Heart left ventricle (tissue), 16 donors: ENCODE measurements at regions of chr14 and their contacts with region 1.

Region 1: GRCh38 chr14:23057757-23058653 is 685 bp upstream of the CDH24 start:
- DNase-seq: peak; percentile 84 to 91 (median 88)
- ATAC-seq: peak; percentile 73 to 77 (median 74)
- H3K4me3 ChIP-seq: peak overlapping the region; percentile 46 to 84 (median 68)
- H3K27ac ChIP-seq: peak overlapping the region in 10 of 12 donors; percentile 39 to 77 (median 58)
- H3K4me1 ChIP-seq: peaks cover 0 to 39% (median 25%) of the 10 kb centered on the region in 12 donors
- H3K27me3 ChIP-seq: no peaks in the 10 kb centered on the region
- CTCF ChIP-seq: peak; percentile 92 to 96 (median 94)
- POLR2A ChIP-seq: no peak

Region 2: GRCh38 chr14:22986508-22987054 is 71.4 kb before region 1 on chr14:
- intact Hi-C with region 1: loop called (anchors 1 to 2 kb)
- DNase-seq: peak; percentile 82 to 88 (median 87)
- ATAC-seq: peak; percentile 35 to 52 (median 40)
- H3K4me3 ChIP-seq: no peak overlapping the region
- H3K27ac ChIP-seq: no peak overlapping the region
- H3K4me1 ChIP-seq: peaks cover 0 to 19% (median 8%) of the 10 kb centered on the region in 12 donors
- H3K27me3 ChIP-seq: peaks cover 0 to 8% (median 0%) of the 10 kb centered on the region in 9 donors
- CTCF ChIP-seq: peak; percentile 85 to 95 (median 92)
- POLR2A ChIP-seq: no peak

Region 3: GRCh38 chr14:22994762-22995275 is 63.2 kb before region 1 on chr14:
- intact Hi-C with region 1: loop called in 2 of 10 experiments (anchors 2 kb)
- DNase-seq: peak in 2 of 5 donors; percentile 24 to 27
- ATAC-seq: peak; percentile 25 to 72 (median 65)
- H3K4me3 ChIP-seq: no peak overlapping the region
- H3K27ac ChIP-seq: no peak overlapping the region
- H3K4me1 ChIP-seq: peaks cover 0 to 25% (median 3%) of the 10 kb centered on the region in 12 donors
- H3K27me3 ChIP-seq: no peaks in the 10 kb centered on the region
- CTCF ChIP-seq: peak; percentile 40 to 67 (median 56)
- POLR2A ChIP-seq: no peak

Region 4: GRCh38 chr14:23020143-23021128 is 37.6 kb before region 1 on chr14:
- intact Hi-C with region 1: no loop called
- DNase-seq: no peak
- ATAC-seq: no peak
- H3K4me3 ChIP-seq: no peak overlapping the region
- H3K27ac ChIP-seq: no peak overlapping the region
- H3K4me1 ChIP-seq: peaks cover 0 to 9% (median 0%) of the 10 kb centered on the region in 12 donors
- H3K27me3 ChIP-seq: no peaks in the 10 kb centered on the region
- CTCF ChIP-seq: no peak
- POLR2A ChIP-seq: no peak

Region 5: DNA sequence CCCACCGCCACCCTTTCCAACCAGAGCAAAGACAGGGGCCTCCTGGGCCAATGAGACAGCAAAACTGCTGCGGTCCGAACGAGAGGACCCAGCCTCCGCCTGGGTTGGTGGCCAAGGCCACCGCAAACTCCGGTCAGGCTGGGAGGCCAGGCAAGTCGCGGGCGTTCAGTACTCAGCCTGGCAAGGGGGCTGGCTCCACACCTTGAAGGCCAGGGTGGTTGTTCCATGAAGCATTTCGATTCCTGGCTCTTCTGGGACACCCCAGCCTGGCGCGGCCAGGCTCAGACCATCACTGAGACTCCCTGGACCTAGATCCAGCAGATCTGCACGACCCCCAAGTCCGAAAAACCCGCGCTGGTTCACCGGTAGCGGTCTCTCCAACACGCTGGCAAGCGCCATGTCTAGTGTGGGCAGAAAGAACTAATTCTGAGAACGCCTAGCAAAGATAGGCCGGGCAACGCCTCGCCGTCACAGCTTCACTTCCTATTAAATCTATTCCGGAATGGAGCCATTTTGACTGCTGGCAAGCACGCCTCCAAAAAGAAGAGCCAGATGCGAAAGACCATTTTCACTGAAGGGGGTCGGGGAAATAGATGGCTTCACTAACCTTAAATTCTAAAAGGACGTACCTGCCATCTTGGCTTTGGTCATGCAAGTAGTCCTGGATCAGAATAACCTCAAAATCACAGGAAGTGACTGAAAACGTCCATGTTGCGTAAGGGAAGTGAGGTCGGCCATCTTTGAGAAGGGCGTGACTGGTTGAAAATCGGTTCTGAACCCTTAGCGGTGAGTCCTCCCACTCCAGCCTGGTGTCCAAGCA is 23.3 kb before region 1 on chr14 and contains the start of gene PSMB5:
- intact Hi-C with region 1: loop called in 1 of 10 experiments (anchors 1 kb)
- DNase-seq: peak; percentile 90 to 93 (median 91)
- ATAC-seq: peak; percentile 97 to 99 (median 98)
- H3K4me3 ChIP-seq: peak within 1 kb of the TSS; percentile 65 to 98 (median 90)
- H3K27ac ChIP-seq: peak within 1 kb of the TSS; percentile 81 to 98 (median 96)
- H3K4me1 ChIP-seq: peaks cover 0 to 23% (median 15%) of the 10 kb centered on the region in 12 donors
- H3K27me3 ChIP-seq: no peaks in the 10 kb centered on the region
- CTCF ChIP-seq: peak in 1 of 12 donors; percentile 3
- POLR2A ChIP-seq: peak in 1 of 2 donors; percentile 44
- total RNA-seq, gene PSMB5: 113 to 186 (median 122) TPM